Prostate gland (tissue), 2 donors: ENCODE measurements at regions of chr6 and their contacts with region 1.

Region 1: DNA sequence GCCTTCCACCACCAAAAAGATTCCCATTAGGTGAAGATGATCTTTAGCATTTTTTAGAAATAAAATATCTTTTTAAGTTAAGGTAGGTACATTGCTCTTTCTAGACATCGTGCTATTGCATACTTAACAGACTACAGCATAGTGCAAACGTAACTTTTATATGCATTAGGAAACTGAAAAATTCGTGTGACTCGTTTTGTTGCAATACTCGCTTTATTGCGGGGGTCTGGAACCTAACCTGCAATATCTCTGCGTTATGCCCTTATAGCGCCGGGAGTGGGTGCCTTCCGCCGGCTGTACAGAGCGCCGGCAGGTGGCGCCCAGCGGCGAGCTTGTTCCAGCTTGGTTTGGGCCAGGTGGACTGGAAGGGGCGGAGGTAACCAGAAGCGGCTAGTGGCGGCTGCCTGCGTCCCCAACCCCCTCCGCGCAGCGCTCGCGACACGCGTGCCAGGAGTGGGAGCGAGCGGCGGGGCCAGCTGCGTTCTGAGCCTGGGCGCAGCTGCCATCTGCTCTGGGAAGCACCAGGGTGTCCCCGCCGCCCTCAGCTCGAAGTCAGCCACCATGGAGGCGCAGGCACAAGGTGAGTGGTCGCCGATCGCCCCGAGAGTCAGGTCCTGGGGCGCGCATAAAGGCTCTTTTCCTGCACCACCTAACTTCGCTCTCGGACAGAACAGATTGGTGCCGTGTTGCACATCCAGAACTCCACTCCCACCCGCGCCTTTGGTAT is at the start of gene TPD52L1:
- DNase-seq: peak; percentile 85
- H3K4me3 ChIP-seq: peak within 1 kb of the TSS; percentile 52 to 68
- H3K27ac ChIP-seq: peak within 1 kb of the TSS; percentile 85 to 90
- H3K4me1 ChIP-seq: peaks cover 5% of the 10 kb centered on the region
- H3K27me3 ChIP-seq: no peaks in the 10 kb centered on the region
- CTCF ChIP-seq: peak; percentile 78 to 92 (median 88)
- POLR2A ChIP-seq: peak; percentile 44
- total RNA-seq, gene TPD52L1: 63.9 to 105 TPM

Region 2: DNA sequence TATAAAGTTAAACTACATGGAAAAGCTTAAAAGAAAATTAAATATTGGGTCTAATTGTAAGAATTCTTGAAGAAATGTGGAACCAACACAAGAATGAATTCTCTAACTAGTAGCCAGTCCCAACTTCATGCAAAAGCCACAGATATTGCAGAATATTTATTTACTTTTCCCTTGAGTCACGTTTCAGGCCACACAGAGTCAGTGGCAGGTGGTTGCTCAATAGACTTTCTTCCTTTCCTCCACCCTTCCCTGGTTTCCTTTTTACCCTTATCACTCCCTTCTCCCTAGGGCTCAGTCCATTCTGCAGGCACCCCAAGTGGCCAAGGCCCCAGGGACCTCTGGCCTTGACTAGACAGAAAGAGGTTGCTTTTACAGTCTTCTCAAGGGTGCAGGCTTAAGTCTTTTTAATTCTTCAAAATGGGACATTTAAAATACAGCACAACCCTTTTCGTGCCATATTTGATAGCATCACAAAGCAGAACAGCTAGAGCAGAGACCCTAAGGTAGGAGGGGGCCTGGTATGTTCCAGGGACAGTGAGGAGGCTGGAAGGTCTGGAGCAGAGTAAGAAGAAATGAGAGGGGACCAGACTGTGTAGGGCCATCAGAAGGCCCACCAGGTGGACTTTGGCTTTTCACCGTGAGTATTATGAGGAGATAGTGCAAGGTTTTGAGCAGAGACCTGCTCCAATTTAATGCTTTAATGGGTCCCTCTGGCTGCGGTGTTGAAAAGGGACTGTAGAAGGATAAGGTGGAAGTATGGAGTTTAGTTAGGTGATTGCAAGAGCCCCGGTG is 83.2 kb after region 1 on chr6:
- intact Hi-C with region 1: loop called (anchors 10 kb)
- DNase-seq: no peak
- H3K4me3 ChIP-seq: no peak overlapping the region
- H3K27ac ChIP-seq: no peak overlapping the region
- H3K4me1 ChIP-seq: no peaks in the 10 kb centered on the region
- H3K27me3 ChIP-seq: no peaks in the 10 kb centered on the region
- CTCF ChIP-seq: no peak
- POLR2A ChIP-seq: no peak

Region 3: DNA sequence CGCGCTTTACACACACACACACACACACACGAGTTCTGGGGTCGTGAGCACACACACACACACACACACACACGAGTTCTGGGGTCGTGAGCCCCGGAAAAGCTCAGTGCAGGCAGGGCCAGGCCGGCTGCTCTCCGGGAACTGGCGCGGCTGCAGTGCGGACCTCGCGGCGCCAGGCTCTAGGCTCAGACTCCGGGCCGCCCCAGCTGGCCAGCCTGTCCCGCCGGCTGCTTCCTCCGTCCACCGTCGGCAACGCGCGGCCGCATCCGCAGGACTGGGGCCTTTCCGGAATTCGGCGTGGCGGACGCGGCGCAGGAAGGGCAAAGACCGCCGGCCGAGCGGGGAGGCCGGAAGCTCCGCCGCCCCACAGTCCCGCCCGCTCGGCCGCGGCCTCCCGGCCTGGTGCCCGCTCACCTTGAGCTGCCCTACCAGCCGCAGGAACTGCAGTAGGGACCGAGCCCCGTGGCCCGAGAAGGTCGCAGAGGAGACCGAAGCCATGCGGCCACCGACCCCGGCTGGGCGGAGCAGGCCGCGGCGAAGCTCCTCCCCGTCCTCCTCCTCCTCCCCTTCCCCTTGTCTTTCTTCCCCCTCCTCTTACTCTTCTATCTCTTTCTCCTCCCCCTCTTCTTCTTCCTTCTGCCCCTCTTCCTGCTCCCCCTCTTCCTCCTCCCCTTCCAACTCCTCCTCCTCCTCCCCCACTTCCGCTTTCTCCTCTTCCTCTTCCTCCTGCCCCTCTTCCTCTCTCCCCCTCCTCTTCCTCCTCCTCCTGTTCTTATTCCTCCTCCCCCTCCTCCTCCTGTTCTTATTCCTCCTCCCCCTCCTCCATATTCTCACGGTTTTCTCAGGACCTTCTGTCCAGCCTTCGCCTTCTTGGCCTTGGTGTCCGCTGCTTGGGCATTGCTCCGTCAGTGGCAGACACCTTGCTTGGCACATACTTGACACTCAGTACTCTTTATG is 148.2 kb after region 1 on chr6 and contains the start of gene HDDC2:
- intact Hi-C with region 1: loop called (anchors 1 kb)
- DNase-seq: peak; percentile 34
- H3K4me3 ChIP-seq: peak within 1 kb of the TSS; percentile 60 to 71
- H3K27ac ChIP-seq: peak within 1 kb of the TSS; percentile 83 to 87
- H3K4me1 ChIP-seq: no peaks in the 10 kb centered on the region
- H3K27me3 ChIP-seq: no peaks in the 10 kb centered on the region
- CTCF ChIP-seq: peak in 1 of 4 experiments; percentile 16
- POLR2A ChIP-seq: no peak
- total RNA-seq, gene HDDC2: 50.4 to 50.9 TPM

Region 4: GRCh38 chr6:125765944-125766343 is 612.4 kb after region 1 on chr6:
- intact Hi-C with region 1: loop called (anchors 5 kb)
- DNase-seq: no peak
- H3K4me3 ChIP-seq: no peak overlapping the region
- H3K27ac ChIP-seq: no peak overlapping the region
- H3K4me1 ChIP-seq: no peaks in the 10 kb centered on the region
- H3K27me3 ChIP-seq: no peaks in the 10 kb centered on the region
- CTCF ChIP-seq: no peak
- POLR2A ChIP-seq: no peak

Region 5: GRCh38 chr6:125956506-125957390 is 803.2 kb after region 1 on chr6 and contains the start of gene HINT3:
- intact Hi-C with region 1: loop called (anchors 10 kb)
- DNase-seq: peak; percentile 96
- H3K4me3 ChIP-seq: peak within 1 kb of the TSS; percentile 81 to 91
- H3K27ac ChIP-seq: peak within 1 kb of the TSS; percentile 93 to 95
- H3K4me1 ChIP-seq: no peaks in the 10 kb centered on the region
- H3K27me3 ChIP-seq: no peaks in the 10 kb centered on the region
- CTCF ChIP-seq: peak; percentile 94 to 99 (median 98)
- POLR2A ChIP-seq: peak; percentile 63
- total RNA-seq, gene HINT3: 29.5 to 40.9 TPM